ENCODE measurements at regions of chr19 and their contacts with region 1.

Region 1: GRCh38 chr19:3429581-3430080 is 50.7 kb downstream of the SMIM24 start:
- DNase-seq: peak in 1 of 2 donors; percentile 100
- H3K4me3 ChIP-seq: no peak overlapping the region
- H3K27ac ChIP-seq: peak overlapping the region; percentile 94
- H3K4me1 ChIP-seq: peaks cover 65% of the 10 kb centered on the region
- H3K27me3 ChIP-seq: no peaks in the 10 kb centered on the region
- CTCF ChIP-seq: peak; percentile 99 to 100 (median 99)
- POLR2A ChIP-seq: no peak

Region 2: DNA sequence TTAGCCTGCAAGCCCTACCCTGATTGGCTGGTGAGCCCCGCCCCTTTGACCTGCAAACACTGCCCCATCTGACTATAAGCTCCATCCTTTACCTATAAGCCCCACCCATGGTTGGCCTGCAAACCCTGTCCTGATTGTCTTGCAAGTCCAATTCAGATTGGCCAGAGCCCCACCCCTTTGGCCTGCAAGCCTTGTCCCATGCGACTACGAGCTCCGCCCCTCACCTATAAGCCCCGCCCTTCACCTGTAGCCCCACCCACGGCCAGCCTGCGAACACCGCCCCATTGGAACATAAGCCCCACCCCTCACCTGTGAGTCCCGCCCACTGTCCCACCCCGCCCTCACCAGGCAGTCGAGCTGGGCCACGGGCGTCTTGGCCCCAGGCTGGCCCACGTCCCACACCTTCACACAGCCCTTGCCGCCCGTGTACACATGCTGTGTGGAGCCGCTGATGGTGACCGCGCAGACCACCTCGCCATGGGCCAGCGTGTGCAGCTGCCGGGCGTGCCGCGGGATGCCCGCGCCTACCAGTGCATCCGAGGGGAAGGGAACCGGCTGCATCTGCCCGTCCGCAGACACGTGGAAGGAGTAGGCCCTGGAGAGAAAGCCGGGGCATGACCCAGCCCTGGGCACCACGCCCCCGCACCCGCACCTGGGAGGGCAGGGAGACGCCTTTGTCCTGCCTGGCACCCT is 423.4 kb before region 1 on chr19:
- intact Hi-C with region 1: no loop called
- DNase-seq: no peak
- H3K4me3 ChIP-seq: no peak overlapping the region
- H3K27ac ChIP-seq: no peak overlapping the region
- H3K4me1 ChIP-seq: no peaks in the 10 kb centered on the region
- H3K27me3 ChIP-seq: no peaks in the 10 kb centered on the region
- CTCF ChIP-seq: no peak
- POLR2A ChIP-seq: no peak

Region 3: GRCh38 chr19:3336680-3337523 is 92.7 kb before region 1 on chr19:
- intact Hi-C with region 1: loop called (anchors 10 kb)
- DNase-seq: peak in 1 of 2 donors; percentile 94
- H3K4me3 ChIP-seq: peak overlapping the region in 1 of 2 donors; percentile 19
- H3K27ac ChIP-seq: peak overlapping the region; percentile 96
- H3K4me1 ChIP-seq: peaks cover 52% of the 10 kb centered on the region
- H3K27me3 ChIP-seq: no peaks in the 10 kb centered on the region
- CTCF ChIP-seq: peak in 1 of 3 experiments; percentile 13
- POLR2A ChIP-seq: peak in 1 of 2 donors; percentile 5

Region 4: DNA sequence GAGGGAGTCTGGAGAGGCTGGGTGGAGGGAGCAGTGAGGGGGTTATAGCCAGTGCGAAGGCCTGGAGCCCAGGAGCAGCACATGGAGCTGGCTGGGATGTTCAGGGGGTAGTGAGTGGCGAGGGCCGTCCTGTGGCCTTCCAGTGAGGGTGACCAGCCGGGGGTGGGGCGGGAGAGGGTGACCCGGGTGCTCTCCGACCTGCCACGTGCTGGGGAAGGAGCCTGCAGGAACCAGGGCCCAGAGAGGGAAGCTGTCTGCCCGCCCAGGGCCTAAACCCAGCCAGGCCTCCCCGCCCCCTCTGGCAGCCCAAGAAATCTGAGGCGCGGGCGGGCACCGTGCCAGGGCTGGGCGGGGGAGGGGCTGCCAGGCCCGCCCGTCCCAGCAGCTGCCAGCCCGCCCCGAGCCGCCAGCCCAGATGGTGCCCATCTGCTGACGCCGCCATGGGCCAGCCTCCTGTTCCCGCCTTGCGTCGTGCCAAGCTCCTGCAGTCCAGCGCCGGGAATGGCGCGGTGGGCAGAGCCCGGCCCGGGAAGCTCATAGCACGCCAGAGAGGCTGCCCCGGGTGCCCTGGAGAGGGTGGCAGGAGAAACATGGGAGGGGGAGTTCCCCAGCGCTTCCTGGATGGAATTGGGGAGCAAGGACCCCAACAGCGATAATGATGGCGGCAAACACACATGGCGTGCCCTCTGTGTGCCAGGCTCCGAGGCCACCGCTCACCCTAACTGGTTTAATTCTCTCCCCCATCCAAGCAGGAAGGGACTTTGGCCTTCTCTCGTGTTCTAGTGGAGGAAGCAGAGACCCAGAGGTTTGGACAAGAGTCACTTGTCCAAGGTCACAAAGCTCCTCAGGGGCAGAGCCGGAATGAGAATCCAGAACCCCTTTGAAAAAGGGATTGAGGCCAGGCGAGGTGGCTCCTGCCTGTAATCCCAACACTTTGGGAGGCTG is 41.7 kb before region 1 on chr19:
- intact Hi-C with region 1: no loop called
- DNase-seq: no peak
- H3K4me3 ChIP-seq: peak overlapping the region in 1 of 2 donors; percentile 32
- H3K27ac ChIP-seq: peak overlapping the region; percentile 97
- H3K4me1 ChIP-seq: peaks cover 86% of the 10 kb centered on the region
- H3K27me3 ChIP-seq: no peaks in the 10 kb centered on the region
- CTCF ChIP-seq: no peak
- POLR2A ChIP-seq: no peak

Region 5: GRCh38 chr19:3403489-3404323 is 25.9 kb before region 1 on chr19:
- intact Hi-C with region 1: loop called (anchors 2 kb)
- DNase-seq: peak in 1 of 2 donors; percentile 97
- H3K4me3 ChIP-seq: peak overlapping the region; percentile 46 to 61
- H3K27ac ChIP-seq: peak overlapping the region; percentile 100
- H3K4me1 ChIP-seq: peaks cover 82% of the 10 kb centered on the region
- H3K27me3 ChIP-seq: no peaks in the 10 kb centered on the region
- CTCF ChIP-seq: no peak
- POLR2A ChIP-seq: no peak

Region 6: DNA sequence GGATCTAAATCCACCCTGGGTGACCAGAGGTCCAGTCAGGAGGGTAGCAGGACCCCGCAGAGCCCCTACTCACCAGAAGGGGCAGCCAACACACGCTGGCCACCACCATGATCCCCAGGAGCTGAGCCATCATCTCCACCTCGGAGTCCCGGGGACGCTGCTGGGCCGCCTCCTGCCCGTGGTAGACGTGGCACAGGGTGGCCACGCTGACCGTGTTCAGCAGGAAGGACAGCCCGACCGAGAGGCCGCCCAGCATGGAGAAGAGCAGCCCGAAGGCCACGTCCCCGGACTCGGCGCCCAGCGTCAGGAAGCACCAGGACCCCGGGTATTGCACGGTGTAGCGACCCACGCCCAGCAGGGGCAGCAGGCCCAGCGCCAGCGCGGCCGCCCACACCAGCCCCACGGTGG is 170.1 kb after region 1 on chr19:
- intact Hi-C with region 1: no loop called
- DNase-seq: no peak
- H3K4me3 ChIP-seq: no peak overlapping the region
- H3K27ac ChIP-seq: no peak overlapping the region
- H3K4me1 ChIP-seq: peaks cover 15% of the 10 kb centered on the region
- H3K27me3 ChIP-seq: no peaks in the 10 kb centered on the region
- CTCF ChIP-seq: no peak
- POLR2A ChIP-seq: no peak

Measured in vagina (tissue), 2 donors.